Panc1 (cell line): ENCODE measurements at regions of chr5 and their contacts with region 1.

Region 1: GRCh38 chr5:108642167-108642906 is 105.4 kb upstream of the FER start:
- DNase-seq: peak; percentile 46
- ATAC-seq: peak; percentile 98
- H3K4me3 ChIP-seq: peak overlapping the region in 1 of 2 experiments; percentile 13; a peak in 1 of 4 replicates
- H3K27ac ChIP-seq: no peak overlapping the region
- H3K4me1 ChIP-seq: no peaks in the 10 kb centered on the region
- H3K27me3 ChIP-seq: peaks cover 3% of the 10 kb centered on the region; the same call in 1 of the 2 replicates
- CTCF ChIP-seq: peak; percentile 94

Region 2: DNA sequence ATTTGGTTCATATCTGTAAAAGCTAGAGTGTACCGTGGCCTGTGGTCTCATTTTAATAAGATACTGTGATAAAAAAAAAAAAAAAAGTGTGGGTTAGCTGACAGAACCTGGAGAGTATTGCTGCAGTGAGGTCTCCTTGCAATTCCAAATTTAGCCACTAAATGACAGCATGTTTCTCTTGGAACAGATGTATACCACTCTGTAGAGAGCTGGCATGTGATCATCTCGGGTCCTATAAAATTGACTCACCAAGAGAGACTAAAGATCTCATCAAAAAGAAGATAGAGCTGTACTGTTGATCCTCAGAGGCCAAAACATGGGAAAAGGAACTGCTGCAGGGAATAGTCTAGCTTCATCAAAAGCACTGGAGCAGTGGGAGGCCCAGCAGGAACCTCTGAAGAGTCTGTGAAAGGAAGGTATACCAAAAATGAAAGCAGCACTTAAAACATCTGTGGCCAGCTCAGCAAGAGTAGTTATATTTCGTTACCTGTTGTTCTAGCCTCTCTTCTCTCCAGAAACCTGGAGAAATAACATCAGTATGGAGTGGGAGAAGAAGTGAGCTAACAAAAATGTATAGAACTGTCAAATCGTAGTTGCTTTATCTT is 1798.4 kb before region 1 on chr5:
- CTCF ChIA-PET with region 1: no interaction called
- POLR2A ChIA-PET with region 1: no interaction called
- in situ Hi-C with region 1: no loop called
- intact Hi-C with region 1: no loop called
- DNase-seq: no peak
- ATAC-seq: peak; percentile 70; the same call in 1 of the 2 replicates
- H3K4me3 ChIP-seq: no peak overlapping the region
- H3K27ac ChIP-seq: no peak overlapping the region
- H3K4me1 ChIP-seq: no peaks in the 10 kb centered on the region
- H3K27me3 ChIP-seq: no peaks in the 10 kb centered on the region
- CTCF ChIP-seq: peak; percentile 39; the same call in 1 of the 2 replicates

Region 3: GRCh38 chr5:108461628-108462367 is 180.5 kb before region 1 on chr5:
- CTCF ChIA-PET with region 1: interaction called, 12 read pairs
- POLR2A ChIA-PET with region 1: no interaction called
- in situ Hi-C with region 1: no loop called
- intact Hi-C with region 1: no loop called
- DNase-seq: no peak
- ATAC-seq: no peak
- H3K4me3 ChIP-seq: no peak overlapping the region
- H3K27ac ChIP-seq: no peak overlapping the region
- H3K4me1 ChIP-seq: no peaks in the 10 kb centered on the region
- H3K27me3 ChIP-seq: no peaks in the 10 kb centered on the region
- CTCF ChIP-seq: no peak

Region 4: DNA sequence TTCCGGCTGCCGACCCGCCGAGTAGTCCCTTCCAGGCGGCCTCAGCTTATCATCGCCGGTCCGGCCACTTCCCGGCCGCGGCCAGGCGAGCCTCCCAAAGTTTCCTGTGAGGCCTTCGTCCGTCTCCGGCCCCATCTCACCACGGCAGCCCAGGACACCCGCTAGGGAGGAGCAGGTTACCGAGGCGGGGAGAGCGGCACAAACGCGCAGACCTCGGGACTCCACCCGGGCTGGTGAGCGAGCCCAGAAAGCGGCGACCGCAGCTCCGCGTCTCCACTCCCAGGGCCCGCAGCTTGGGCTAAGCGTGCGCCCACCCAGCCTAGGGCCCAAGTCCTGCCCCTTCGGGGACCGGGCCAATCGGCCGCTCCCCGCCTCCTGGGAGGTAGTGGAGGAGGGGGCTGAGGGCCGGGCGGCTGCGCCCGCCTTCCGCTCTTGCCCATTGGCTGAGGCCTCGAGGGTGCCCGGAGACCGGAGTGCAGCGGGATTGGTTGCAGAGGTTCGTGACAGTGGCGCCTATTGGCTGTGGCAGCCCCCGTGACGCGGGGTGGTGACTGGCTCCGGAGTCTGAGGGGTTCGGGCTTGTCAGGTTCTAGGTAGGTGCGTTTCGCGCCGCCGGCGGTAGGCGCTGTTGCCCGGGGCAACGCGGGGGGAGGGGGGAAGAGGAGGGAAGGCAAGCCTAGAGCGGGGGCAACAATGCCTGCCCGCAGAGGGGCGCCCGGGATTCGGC is 106.2 kb after region 1 on chr5:
- CTCF ChIA-PET with region 1: no interaction called
- POLR2A ChIA-PET with region 1: no interaction called
- in situ Hi-C with region 1: no loop called
- intact Hi-C with region 1: no loop called
- DNase-seq: peak; percentile 91
- ATAC-seq: peak; percentile 98
- H3K4me3 ChIP-seq: peak overlapping the region; percentile 93 to 97
- H3K27ac ChIP-seq: peak overlapping the region; percentile 99
- H3K4me1 ChIP-seq: peaks cover 13% of the 10 kb centered on the region
- H3K27me3 ChIP-seq: no peaks in the 10 kb centered on the region
- CTCF ChIP-seq: peak; percentile 42

Region 5: GRCh38 chr5:108762660-108763059 is 120.3 kb after region 1 on chr5:
- CTCF ChIA-PET with region 1: no interaction called
- POLR2A ChIA-PET with region 1: no interaction called
- in situ Hi-C with region 1: no loop called
- intact Hi-C with region 1: no loop called
- DNase-seq: no peak
- ATAC-seq: no peak
- H3K4me3 ChIP-seq: no peak overlapping the region
- H3K27ac ChIP-seq: no peak overlapping the region
- H3K4me1 ChIP-seq: no peaks in the 10 kb centered on the region
- H3K27me3 ChIP-seq: no peaks in the 10 kb centered on the region
- CTCF ChIP-seq: no peak

Region 6: GRCh38 chr5:109479260-109479860 is 837.0 kb after region 1 on chr5:
- CTCF ChIA-PET with region 1: no interaction called
- POLR2A ChIA-PET with region 1: no interaction called
- in situ Hi-C with region 1: no loop called
- intact Hi-C with region 1: loop called (anchors 5 kb)
- DNase-seq: no peak
- ATAC-seq: no peak
- H3K4me3 ChIP-seq: no peak overlapping the region
- H3K27ac ChIP-seq: no peak overlapping the region
- H3K4me1 ChIP-seq: no peaks in the 10 kb centered on the region
- H3K27me3 ChIP-seq: peaks cover 3% of the 10 kb centered on the region; the same call in 1 of the 2 replicates
- CTCF ChIP-seq: peak; percentile 56; the same call in 1 of the 2 replicates